ENCODE measurements at regions of chr1 and their contacts with region 1.

Region 1: DNA sequence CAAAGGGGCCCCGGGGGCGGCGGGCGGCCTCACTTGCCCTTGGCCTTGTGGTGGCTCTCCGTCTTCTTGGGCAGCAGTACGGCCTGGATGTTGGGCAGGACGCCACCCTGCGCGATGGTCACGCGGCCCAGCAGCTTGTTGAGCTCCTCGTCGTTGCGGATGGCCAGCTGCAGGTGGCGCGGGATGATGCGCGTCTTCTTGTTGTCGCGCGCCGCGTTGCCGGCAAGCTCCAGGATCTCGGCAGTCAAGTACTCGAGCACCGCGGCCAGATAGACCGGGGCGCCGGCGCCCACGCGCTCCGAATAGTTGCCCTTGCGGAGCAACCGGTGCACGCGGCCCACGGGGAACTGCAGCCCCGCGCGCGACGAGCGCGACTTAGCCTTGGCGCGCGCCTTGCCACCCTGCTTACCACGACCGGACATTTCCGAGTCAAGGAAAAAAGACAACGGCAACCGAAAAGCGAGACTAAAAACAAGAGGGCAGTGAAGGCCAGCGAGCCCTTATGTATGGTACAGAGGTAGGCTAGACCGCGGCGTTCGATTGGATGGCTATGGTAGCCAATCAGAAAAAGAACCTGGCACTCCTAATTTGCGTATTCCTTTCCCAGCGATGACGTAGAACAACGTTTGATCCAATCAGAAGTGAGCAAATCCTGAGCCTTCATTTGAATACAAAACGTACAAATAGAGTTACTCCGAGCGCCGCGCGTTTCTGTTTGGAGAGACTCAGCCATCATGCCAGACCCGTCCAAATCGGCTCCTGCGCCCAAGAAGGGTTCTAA is 29.6 kb upstream of the RNF187 start:
- DNase-seq: peak; percentile 100
- H3K4me3 Mint-ChIP-seq: peak overlapping the region; percentile 97
- H3K27ac Mint-ChIP-seq: peak overlapping the region; percentile 98
- H3K4me1 Mint-ChIP-seq: peaks cover 35% of the 10 kb centered on the region
- H3K27me3 Mint-ChIP-seq: no peaks in the 10 kb centered on the region
- CTCF ChIP-seq: peak; percentile 52

Region 2: GRCh38 chr1:228037401-228038386 is 419.9 kb before region 1 on chr1:
- CTCF ChIA-PET with region 1: no interaction called
- POLR2A ChIA-PET with region 1: no interaction called
- intact Hi-C with region 1: no loop called
- DNase-seq: peak; percentile 40
- H3K4me3 Mint-ChIP-seq: no peak overlapping the region
- H3K27ac Mint-ChIP-seq: no peak overlapping the region
- H3K4me1 Mint-ChIP-seq: no peaks in the 10 kb centered on the region
- H3K27me3 Mint-ChIP-seq: no peaks in the 10 kb centered on the region
- CTCF ChIP-seq: no peak

Region 3: DNA sequence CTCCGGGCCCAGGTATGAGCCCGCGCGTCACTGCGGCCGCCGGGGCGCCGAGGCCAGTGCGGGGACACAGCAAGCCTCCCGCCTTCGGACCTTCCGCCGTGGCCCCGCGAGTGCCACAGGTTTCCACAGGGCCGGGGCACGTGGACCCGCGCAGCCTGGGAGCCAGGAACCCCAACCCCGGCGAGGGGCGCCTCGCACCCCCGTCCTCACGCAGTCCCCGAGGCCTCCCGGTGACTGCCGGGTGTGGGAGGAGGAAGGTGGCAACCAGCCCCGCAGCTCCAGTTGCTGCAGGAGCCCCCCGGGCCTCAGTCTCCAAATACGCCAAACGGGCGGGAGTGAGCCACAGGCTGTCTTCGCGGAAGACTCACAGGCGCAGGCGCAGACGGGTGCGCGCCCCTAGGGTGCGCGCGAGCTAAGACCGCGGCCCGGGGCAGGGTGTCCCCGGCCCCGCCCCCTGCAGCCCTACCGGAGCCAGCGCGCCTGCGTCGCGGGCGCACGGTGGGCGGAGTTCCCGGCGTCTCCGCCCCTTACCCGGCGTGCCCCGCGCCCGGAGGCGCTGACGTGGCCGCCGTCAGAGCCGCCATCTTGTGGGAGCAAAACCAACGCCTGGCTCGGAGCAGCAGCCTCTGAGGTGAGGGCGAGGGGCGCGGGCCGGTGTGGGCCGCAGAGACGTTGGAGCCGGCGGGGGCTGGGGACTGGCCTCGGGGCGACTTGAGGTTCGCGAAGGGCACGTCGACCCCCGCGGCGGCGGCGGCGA is 375.3 kb before region 1 on chr1 and contains the start of gene ARF1:
- CTCF ChIA-PET with region 1: no interaction called
- POLR2A ChIA-PET with region 1: interaction called, 36 read pairs
- intact Hi-C with region 1: no loop called
- DNase-seq: peak; percentile 98
- H3K4me3 Mint-ChIP-seq: peak within 1 kb of the TSS; percentile 98
- H3K27ac Mint-ChIP-seq: peak within 1 kb of the TSS; percentile 97
- H3K4me1 Mint-ChIP-seq: peaks cover 49% of the 10 kb centered on the region
- H3K27me3 Mint-ChIP-seq: no peaks in the 10 kb centered on the region
- CTCF ChIP-seq: no peak
- total RNA-seq, gene ARF1: 870 and 1,140 TPM in 2 replicates

Region 4: DNA sequence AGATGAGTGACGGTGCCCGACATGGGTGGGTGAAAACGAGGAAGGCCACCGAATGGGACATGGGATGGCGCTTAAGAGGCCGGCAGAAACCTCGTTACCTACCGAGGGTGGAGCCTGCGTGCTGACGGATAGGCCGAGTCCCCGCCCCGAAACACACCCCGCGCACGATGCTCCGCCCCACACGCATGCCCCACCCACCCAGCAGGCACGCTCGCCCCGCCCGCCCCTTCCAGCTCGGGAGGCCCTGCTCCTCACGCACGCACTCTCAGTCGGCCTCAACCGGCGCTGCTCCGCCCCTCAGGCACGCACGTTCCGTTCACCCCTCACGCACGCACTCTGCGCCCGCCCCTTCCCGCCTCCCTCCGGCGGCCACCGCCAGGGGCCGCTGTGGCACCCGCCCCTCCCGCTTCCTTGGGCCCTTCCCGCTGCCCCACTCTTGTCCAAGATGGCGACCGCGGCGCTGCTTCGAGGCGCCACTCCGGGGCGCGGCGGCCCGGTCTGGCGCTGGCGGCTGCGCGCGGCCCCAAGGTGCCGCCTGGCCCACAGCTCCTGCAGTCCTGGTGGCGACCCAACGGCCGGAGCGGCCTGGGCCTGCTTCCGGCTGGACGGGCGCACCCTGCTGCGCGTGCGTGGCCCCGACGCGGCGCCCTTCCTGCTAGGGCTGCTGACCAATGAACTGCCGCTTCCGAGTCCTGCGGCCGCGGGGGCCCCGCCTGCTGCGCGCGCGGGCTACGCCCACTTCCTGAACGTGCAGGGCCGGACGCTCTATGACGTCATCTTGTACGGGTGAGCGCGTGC is 292.0 kb before region 1 on chr1 and contains the start of gene IBA57:
- CTCF ChIA-PET with region 1: interaction called, 6 read pairs
- POLR2A ChIA-PET with region 1: interaction called, 68 read pairs
- intact Hi-C with region 1: loop called (anchors 1 kb)
- DNase-seq: peak; percentile 100
- H3K4me3 Mint-ChIP-seq: peak within 1 kb of the TSS; percentile 70
- H3K27ac Mint-ChIP-seq: peak within 1 kb of the TSS; percentile 86
- H3K4me1 Mint-ChIP-seq: peaks cover 46% of the 10 kb centered on the region
- H3K27me3 Mint-ChIP-seq: no peaks in the 10 kb centered on the region
- CTCF ChIP-seq: peak; percentile 99
- total RNA-seq, gene IBA57: 12.0 and 16.5 TPM in 2 replicates

Region 5: GRCh38 chr1:228265167-228265566 is 192.4 kb before region 1 on chr1:
- CTCF ChIA-PET with region 1: interaction called, 7 read pairs
- POLR2A ChIA-PET with region 1: interaction called, 4 read pairs
- intact Hi-C with region 1: loop called (anchors 1 kb)
- DNase-seq: peak; percentile 48
- H3K4me3 Mint-ChIP-seq: no peak overlapping the region
- H3K27ac Mint-ChIP-seq: no peak overlapping the region
- H3K4me1 Mint-ChIP-seq: no peaks in the 10 kb centered on the region
- H3K27me3 Mint-ChIP-seq: no peaks in the 10 kb centered on the region
- CTCF ChIP-seq: peak; percentile 63

Region 6: GRCh38 chr1:228445843-228446650 is 11.5 kb before region 1 on chr1:
- CTCF ChIA-PET with region 1: interaction called, 5 read pairs
- POLR2A ChIA-PET with region 1: interaction called, 18 read pairs
- intact Hi-C with region 1: no loop called
- DNase-seq: no peak
- H3K4me3 Mint-ChIP-seq: no peak overlapping the region
- H3K27ac Mint-ChIP-seq: no peak overlapping the region
- H3K4me1 Mint-ChIP-seq: no peaks in the 10 kb centered on the region
- H3K27me3 Mint-ChIP-seq: peaks cover 71% of the 10 kb centered on the region
- CTCF ChIP-seq: no peak

Region 7: DNA sequence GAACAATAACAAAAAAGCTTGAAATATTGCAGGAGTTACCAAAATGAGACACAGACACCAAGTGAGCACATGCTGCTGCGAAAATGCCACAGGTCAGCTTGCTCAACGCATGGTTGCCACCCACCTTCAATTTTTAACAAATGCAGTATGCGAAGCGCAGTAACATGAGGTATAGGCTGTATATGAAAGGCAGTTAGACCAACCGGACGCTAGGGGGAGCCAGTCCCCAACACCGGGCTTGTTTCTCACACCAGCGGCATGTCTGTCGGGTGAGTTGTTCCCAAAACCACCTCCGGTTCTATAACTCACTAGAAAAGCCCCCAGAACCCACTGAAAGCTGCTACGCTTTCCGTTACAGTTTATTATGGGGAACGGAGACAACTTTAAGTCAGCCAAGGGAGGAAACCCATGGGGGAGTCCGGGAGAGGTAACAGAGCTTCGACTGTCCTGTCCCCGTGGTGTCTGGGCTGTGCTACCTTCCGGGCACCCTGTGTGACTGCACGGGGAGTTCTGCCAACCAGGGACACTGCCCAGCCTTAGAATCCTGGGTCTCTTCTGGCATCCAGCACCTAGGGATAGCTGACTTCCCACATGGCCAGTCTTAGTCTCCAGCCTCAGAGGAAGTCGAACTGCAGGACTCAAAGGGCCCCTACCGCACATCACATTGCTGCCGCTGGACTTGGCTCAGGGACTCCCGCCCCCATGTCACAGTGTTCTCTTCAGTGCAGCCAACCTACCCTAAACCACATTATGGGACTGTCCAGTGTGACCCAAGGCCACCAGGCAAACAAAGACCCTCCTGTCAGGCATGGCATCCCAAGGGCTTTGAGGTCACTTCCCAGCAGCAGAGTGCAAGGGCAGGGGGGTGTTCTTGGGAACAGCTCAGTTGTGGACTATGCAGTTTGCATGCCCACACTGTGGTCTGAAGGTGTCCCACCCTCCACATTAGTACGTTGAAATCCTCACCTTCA is 43.6 kb after region 1 on chr1:
- CTCF ChIA-PET with region 1: interaction called, 6 read pairs
- POLR2A ChIA-PET with region 1: interaction called, 23 read pairs
- intact Hi-C with region 1: loop called (anchors 1 kb)
- DNase-seq: peak; percentile 97
- H3K4me3 Mint-ChIP-seq: peak overlapping the region; percentile 20
- H3K27ac Mint-ChIP-seq: no peak overlapping the region
- H3K4me1 Mint-ChIP-seq: peaks cover 10% of the 10 kb centered on the region
- H3K27me3 Mint-ChIP-seq: no peaks in the 10 kb centered on the region
- CTCF ChIP-seq: peak; percentile 99

Measured in MCF 10A (cell line).